HCT116 (cell line): ENCODE measurements at regions of chr17 and their contacts with region 1.

Region 1: DNA sequence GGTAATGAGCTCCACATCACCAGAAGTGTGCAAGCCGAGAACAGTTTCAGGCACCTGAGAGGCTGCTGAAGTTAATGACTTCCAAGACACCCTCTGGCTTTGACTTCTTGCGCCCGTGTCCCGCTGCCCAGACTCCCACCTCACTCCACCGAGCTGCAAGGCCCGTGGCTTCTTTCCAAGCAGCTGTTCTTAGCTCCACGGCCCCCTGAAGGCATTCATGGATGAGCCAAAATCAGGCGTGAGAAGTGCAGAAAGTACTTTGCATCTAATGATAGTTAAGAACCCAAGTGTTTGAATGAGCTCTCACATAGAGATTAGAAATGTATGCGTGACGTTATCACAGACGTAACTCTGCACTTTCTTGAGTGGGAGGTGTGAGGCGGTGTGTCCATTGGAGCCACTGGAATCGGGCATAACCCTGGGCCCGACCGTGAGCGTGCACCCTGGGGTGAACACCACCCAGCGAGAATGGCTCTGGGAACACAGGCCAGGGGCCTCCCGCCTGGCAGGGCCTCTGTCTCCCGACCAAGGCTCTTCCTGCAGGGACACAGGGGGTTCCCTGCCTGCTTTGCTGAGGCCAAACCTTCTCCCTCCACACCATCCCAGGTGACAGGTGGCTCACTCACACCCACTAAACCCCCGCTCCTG is 11.0 kb downstream of the NPTX1 start:
- DNase-seq: no peak
- ATAC-seq: no peak
- H3K4me3 ChIP-seq: no peak overlapping the region
- H3K27ac ChIP-seq: no peak overlapping the region
- H3K4me1 ChIP-seq: no peaks in the 10 kb centered on the region
- H3K27me3 ChIP-seq: 0 out of 2 replicates have a peak, but pooled peaks cover 9% of the 10 kb centered on the region
- CTCF ChIP-seq: no peak
- POLR2A ChIP-seq: no peak
- RAD21 ChIP-seq: no peak

Region 2: GRCh38 chr17:80454557-80455335 is 10.7 kb before region 1 on chr17:
- CTCF ChIA-PET with region 1: no interaction called
- POLR2A ChIA-PET with region 1: interaction called, 11 read pairs
- RAD21 ChIA-PET with region 1: no interaction called
- intact Hi-C with region 1: no loop called
- DNase-seq: peak; percentile 96
- ATAC-seq: peak; percentile 92
- H3K4me3 ChIP-seq: peak overlapping the region; percentile 78 to 82
- H3K27ac ChIP-seq: peak overlapping the region; percentile 91
- H3K4me1 ChIP-seq: peaks cover 11 to 40% of the 10 kb centered on the region in 2 experiments; a peak in 3 of 4 replicates
- H3K27me3 ChIP-seq: no peaks in the 10 kb centered on the region
- CTCF ChIP-seq: no peak
- POLR2A ChIP-seq: peak; percentile 63
- RAD21 ChIP-seq: no peak

Region 3: GRCh38 chr17:80575057-80575875 is 109.8 kb after region 1 on chr17:
- CTCF ChIA-PET with region 1: no interaction called
- POLR2A ChIA-PET with region 1: no interaction called
- RAD21 ChIA-PET with region 1: no interaction called
- intact Hi-C with region 1: no loop called
- DNase-seq: peak; percentile 90
- ATAC-seq: peak; percentile 100
- H3K4me3 ChIP-seq: no peak overlapping the region
- H3K27ac ChIP-seq: no peak overlapping the region
- H3K4me1 ChIP-seq: peaks cover 0 to 5% of the 10 kb centered on the region in 2 experiments; a peak in 2 of 4 replicates
- H3K27me3 ChIP-seq: no peaks in the 10 kb centered on the region
- CTCF ChIP-seq: peak; percentile 100
- POLR2A ChIP-seq: no peak
- RAD21 ChIP-seq: peak; percentile 99